ENCODE measurements at regions of chr3 and their contacts with region 1.

Region 1: DNA sequence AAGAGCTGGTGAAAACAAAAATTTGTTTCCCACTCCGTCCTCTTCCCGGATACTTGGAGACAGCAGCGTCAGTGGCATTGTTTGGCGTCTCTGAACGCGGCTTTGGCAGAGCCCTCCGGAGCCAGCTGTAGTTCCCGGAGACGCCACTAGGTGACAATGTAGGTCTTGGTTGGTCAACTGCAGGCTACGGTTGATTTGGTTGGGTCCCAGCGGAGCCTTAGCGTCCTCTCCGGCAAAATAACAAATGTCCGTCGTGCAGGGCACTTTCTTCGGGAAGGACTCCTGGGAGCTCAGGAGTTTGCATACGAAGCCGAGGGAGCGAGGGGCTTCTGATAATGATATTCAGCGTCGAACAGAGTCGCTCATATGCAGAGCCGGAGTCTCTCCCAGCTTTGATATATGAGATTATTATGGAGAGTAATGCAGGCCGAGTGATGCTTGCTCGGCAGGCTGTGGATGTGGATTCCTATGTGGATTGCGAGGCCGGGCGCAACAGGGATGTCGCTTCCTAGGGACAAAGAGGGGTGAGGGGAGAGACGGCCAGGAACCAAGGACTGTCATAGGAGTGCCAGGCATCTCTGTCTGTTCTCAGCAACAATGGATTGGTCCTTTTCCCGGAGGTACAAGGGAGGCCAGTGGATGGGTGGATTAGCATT is 74.8 kb downstream of the IL20RB start:
- DNase-seq: peak; percentile 86
- ATAC-seq: peak; percentile 91
- H3K4me3 Mint-ChIP-seq: peak overlapping the region; percentile 47
- H3K27ac Mint-ChIP-seq: no peak overlapping the region
- H3K4me1 Mint-ChIP-seq: peaks cover 8% of the 10 kb centered on the region
- H3K27me3 Mint-ChIP-seq: peaks cover 37% of the 10 kb centered on the region

Region 2: DNA sequence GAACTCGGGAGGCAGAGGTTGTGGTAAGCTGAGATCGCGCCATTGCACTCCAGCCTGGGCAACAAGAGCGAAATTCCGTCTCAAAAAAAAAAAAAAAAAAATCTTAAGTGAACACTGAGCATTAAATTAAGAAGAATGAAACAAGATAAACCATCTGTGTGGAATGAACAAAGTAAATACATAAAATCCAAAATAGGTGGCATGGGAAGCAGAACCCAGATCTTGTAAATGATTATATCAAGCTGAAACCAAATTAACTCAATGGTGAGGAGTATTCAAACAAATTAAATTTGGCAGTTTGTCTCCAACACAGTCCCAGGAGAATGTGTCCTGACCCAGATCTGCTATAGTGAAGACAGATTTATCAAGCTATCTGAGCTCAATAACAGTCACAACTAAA is 312.5 kb before region 1 on chr3:
- CTCF ChIA-PET with region 1: no interaction called
- DNase-seq: no peak
- ATAC-seq: no peak
- H3K4me3 Mint-ChIP-seq: no peak overlapping the region
- H3K27ac Mint-ChIP-seq: no peak overlapping the region
- H3K4me1 Mint-ChIP-seq: peaks cover 5% of the 10 kb centered on the region
- H3K27me3 Mint-ChIP-seq: no peaks in the 10 kb centered on the region

Region 3: DNA sequence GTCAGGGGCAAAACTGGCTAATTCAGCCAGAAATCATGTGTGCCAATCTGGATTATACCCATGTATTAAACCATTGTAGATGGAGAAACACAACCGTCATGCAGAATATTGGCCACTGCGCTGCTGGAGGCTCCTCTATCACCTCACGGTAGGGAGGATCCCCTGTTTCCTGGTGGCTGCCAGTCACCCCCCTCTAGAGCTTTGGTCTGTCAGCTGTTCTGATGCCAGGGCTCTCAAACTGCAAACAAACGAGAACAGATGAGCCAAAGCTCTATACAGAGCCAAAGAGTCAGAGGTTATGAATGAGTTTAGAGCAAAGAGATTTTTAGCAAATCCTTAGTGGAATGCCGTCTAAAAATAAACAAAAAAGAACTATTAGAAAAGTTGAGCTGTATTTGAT is 12.3 kb before region 1 on chr3:
- CTCF ChIA-PET with region 1: interaction called, 20 read pairs
- DNase-seq: no peak
- ATAC-seq: no peak
- H3K4me3 Mint-ChIP-seq: no peak overlapping the region
- H3K27ac Mint-ChIP-seq: no peak overlapping the region
- H3K4me1 Mint-ChIP-seq: no peaks in the 10 kb centered on the region
- H3K27me3 Mint-ChIP-seq: peaks cover 12% of the 10 kb centered on the region